ENCODE measurements at regions of chr1 and their contacts with region 1.

Region 1: DNA sequence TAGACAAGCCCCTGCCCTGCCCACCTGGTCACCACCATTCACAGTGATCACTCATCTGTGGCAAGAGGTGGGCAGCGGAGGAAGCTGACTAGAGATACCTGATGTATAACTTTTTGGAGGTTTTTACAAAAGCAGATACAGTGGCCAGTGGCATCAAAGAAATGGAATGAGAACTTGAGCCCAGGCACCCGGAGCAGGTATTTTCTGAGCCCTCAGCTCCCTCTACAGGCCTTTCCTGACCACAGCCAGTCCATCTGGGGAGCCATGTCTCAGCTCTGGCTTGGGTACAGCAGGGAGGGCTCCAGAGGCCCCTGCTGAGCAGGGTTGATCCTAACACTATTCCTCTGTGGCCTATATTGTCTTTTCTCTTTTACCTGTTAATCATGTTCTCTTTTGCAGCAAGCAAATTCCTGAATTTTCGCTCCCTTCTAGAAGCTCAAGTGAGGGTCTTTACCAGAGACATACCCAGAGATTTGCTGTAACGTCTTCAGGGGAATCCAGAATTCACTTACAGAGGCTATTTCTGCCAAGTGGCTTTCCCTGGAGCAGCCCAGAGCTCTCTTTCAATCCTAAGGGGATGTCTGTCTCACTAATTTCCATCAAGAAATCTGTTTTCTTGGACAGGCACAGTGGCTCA is 27.3 kb downstream of the GPR157 start:
- DNase-seq: peak; percentile 68
- H3K4me3 ChIP-seq: no peak overlapping the region
- H3K27ac ChIP-seq: no peak overlapping the region
- H3K4me1 ChIP-seq: no peaks in the 10 kb centered on the region
- H3K27me3 ChIP-seq: no peaks in the 10 kb centered on the region
- CTCF ChIP-seq: peak in 3 of 4 experiments; percentile 72 to 76 (median 74)
- POLR2A ChIP-seq: no peak

Region 2: DNA sequence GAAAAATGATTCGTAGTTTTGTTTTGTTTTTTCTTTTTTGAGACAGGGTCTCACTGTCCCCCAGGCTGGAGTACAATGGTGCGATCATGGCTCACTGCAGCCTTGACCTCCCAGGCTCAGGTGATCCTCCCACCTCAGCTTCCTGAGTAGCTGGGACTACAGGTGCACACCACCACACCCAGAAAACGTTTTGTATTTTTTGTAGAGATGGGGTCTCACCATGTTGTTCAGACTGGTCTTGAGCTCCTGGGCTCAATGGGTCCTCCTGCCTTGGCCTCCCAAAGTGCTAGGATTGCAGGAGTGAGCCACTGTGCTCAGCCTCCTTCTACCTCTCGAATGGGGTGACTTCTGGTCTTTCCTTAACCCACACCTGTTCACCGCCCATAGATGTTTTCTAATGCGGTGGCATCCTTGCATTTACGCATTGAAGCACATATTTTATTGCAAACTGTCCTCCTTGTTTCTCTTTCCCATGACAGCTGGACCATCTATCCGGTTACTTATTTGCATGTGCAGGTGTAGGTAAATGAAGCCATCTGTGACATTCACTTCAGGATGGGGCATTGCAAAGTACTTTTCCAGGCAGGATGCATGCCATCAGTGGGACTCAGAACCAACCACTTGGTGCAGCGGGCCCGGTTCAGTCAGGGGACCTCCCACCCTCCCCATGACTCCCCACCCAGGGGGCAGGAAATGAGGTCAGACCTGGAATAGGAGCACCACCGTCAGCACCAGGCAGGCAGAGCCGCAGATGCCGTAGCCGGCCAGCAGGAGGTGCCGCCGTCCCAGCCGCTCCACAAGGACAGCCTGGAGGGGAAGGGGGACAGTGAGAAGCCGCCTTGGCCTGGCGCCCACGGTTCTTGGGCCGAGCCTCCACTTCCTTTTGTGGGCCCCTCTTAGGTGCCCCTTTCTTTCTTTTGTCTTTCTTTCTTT is 91.9 kb before region 1 on chr1:
- intact Hi-C with region 1: loop called (anchors 5 kb)
- DNase-seq: no peak
- H3K4me3 ChIP-seq: no peak overlapping the region
- H3K27ac ChIP-seq: no peak overlapping the region
- H3K4me1 ChIP-seq: no peaks in the 10 kb centered on the region
- H3K27me3 ChIP-seq: no peaks in the 10 kb centered on the region
- CTCF ChIP-seq: peak in 2 of 4 experiments; percentile 11 to 42
- POLR2A ChIP-seq: no peak